GM13976 (cell line): ENCODE measurements at regions of chr12 and their contacts with region 1.

Region 1: GRCh38 chr12:5078423-5078822 is 34.7 kb downstream of the KCNA5 start:
- DNase-seq: no peak
- CTCF ChIP-seq: no peak

Region 2: DNA sequence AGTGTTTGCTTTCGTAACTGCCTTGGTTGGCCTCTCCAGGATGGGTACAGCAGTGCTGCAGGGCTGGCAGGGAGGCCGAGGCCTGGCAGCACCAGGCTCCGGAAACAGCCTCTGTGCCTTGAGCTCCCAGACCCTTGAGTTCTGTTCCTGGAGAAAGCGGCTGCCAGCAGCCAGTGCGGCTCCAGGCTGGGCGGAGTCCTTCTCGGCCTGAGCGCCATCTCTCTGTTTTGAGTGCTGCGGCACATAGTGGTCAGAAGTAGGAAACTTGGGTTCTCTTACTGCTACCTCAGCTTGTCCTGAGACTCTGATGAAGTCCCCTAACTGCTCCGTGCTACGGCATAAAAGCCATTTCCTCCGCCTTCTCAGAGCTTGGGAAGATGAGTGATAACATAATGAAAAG is 102.8 kb before region 1 on chr12:
- in situ Hi-C with region 1: no loop called
- DNase-seq: no peak
- CTCF ChIP-seq: peak; percentile 28

Region 3: GRCh38 chr12:5022465-5023061 is 55.9 kb before region 1 on chr12:
- in situ Hi-C with region 1: loop called (anchors 5 kb)
- DNase-seq: peak; percentile 85
- CTCF ChIP-seq: peak; percentile 96

Region 4: GRCh38 chr12:5309654-5310053 is 231.2 kb after region 1 on chr12:
- in situ Hi-C with region 1: no loop called
- DNase-seq: no peak
- CTCF ChIP-seq: no peak

Region 5: GRCh38 chr12:5648692-5649359 is 570.4 kb after region 1 on chr12:
- in situ Hi-C with region 1: no loop called
- DNase-seq: no peak
- CTCF ChIP-seq: no peak